Activated CD4-positive, alpha-beta memory T cell treated with anti-CD3 and anti-CD28 coated beads for 36 hours (primary cell): ENCODE measurements at regions of chr14 and their contacts with region 1.

Region 1: DNA sequence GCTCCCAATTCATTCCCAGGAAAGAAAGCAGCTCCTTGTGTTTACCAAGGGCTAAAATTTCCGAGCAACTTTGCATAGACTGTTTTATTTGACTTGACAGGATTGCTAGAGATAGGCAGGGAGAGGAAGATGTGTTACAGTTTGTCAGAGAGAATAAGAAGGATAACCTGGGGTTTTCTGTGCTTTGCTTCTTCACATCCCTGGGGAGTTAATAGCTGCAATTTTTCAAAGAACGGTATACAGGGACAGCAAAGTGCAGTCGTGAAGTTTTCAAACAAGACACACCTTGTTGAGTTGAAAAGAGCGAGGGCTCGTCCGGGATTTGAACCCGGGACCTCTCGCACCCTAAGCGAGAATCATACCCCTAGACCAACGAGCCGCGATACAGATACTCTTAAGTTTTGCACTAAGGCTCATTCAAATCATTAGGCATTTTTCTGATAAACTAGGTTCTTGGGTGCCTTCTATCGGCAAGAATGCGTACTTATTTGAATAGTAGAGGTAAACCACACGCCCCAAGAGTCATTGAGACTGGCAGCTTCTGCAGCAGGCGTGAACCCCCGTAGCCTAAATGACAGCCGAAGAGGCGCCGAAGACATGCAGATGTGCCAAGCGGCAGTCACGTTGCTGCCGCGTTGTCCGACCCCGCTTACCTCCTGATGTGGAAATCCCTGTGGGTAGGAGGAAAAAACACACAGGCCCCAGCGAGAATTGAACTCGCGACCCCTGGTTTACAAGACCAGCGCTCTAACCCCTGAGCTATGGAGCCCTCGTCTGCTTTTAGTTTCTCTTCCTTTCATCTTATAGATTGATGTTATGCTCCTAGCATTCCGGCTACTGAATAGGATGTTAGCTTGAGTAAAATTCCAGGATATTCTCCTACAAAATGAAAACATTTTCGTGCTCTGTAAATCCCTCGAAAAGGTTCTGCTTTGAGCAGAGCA is 22.2 kb upstream of the RNASE12 start:
- DNase-seq: peak; percentile 90
- H3K4me3 Mint-ChIP-seq: no peak overlapping the region
- H3K27ac Mint-ChIP-seq: no peak overlapping the region
- H3K4me1 Mint-ChIP-seq: peaks cover 11% of the 10 kb centered on the region
- H3K27me3 Mint-ChIP-seq: no peaks in the 10 kb centered on the region

Region 2: GRCh38 chr14:20305265-20306078 is 307.9 kb before region 1 on chr14 and contains the start of gene TTC5:
- CTCF ChIA-PET with region 1: interaction called, 3 read pairs
- POLR2A ChIA-PET with region 1: no interaction called
- intact Hi-C with region 1: loop called (anchors 2 kb)
- DNase-seq: peak; percentile 93
- H3K4me3 Mint-ChIP-seq: peak within 1 kb of the TSS; percentile 89
- H3K27ac Mint-ChIP-seq: peak within 1 kb of the TSS; percentile 80
- H3K4me1 Mint-ChIP-seq: peaks cover 24% of the 10 kb centered on the region
- H3K27me3 Mint-ChIP-seq: no peaks in the 10 kb centered on the region
- total RNA-seq, gene TTC5: 19.0 to 22.7 TPM

Region 3: GRCh38 chr14:20343092-20343861 is 270.1 kb before region 1 on chr14 and contains the start of gene PARP2:
- CTCF ChIA-PET with region 1: interaction called, 7 read pairs
- POLR2A ChIA-PET with region 1: interaction called, 13 read pairs
- intact Hi-C with region 1: loop called (anchors 1 kb)
- DNase-seq: peak; percentile 97
- H3K4me3 Mint-ChIP-seq: peak within 1 kb of the TSS; percentile 93
- H3K27ac Mint-ChIP-seq: peak within 1 kb of the TSS; percentile 94
- H3K4me1 Mint-ChIP-seq: peaks cover 19% of the 10 kb centered on the region
- H3K27me3 Mint-ChIP-seq: peaks cover 3% of the 10 kb centered on the region
- total RNA-seq, gene PARP2: 46.3 to 47.3 TPM

Region 4: GRCh38 chr14:20454516-20455354 is 158.6 kb before region 1 on chr14 and contains the starts of genes APEX1 and OSGEP:
- CTCF ChIA-PET with region 1: no interaction called
- POLR2A ChIA-PET with region 1: interaction called, 3 read pairs
- intact Hi-C with region 1: loop called (anchors 1 kb)
- DNase-seq: peak; percentile 99
- H3K4me3 Mint-ChIP-seq: peak within 1 kb of the TSS; percentile 13
- H3K27ac Mint-ChIP-seq: no peak within 1 kb of the TSS
- H3K4me1 Mint-ChIP-seq: peaks cover 22% of the 10 kb centered on the region
- H3K27me3 Mint-ChIP-seq: no peaks in the 10 kb centered on the region
- total RNA-seq, gene APEX1: 186 to 193 TPM
- total RNA-seq, gene OSGEP: 39.2 to 41.0 TPM

Region 5: DNA sequence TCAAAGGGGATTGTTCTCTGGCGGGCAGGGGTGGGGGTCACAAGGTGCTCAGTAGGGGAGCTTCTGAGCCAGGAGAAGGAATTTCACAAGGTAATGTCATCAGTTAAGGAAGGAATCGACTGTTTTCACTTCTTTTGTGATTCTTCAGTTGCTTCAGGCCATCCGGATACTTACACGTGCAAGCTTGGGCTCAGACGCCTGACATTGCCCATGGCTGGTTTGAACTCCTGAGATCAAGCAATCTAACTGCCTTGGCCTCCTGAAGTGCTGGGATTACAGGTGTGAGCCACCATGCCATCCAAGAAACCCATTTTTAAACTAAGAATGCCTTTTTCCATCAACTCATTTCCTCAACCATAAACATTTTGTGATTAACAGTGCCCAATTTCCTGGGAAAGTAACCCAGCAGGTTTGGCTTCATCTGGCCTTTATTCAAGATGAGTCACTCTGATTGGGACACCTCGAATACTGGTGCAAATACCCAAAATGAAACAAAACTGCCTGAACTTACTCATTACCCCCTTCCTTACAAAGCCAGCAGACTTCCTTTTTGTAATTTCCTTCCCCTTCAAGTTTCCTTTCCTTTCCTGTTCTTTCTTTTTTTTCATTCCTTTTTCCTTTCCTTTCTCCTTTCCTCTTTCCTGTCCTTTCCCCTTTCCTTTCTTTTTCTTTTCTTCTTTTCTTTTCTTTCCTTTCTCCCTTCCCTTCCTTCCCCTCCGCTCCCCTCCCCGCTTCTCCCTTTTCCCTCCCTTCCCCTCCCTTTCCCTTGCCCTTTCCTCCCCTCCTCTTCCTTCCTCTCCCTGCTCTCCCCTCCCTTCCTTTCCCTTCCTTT is 118.2 kb before region 1 on chr14:
- CTCF ChIA-PET with region 1: no interaction called
- POLR2A ChIA-PET with region 1: no interaction called
- intact Hi-C with region 1: loop called (anchors 5 kb)
- DNase-seq: no peak
- H3K4me3 Mint-ChIP-seq: no peak overlapping the region
- H3K27ac Mint-ChIP-seq: peak overlapping the region; percentile 35
- H3K4me1 Mint-ChIP-seq: peaks cover 45% of the 10 kb centered on the region
- H3K27me3 Mint-ChIP-seq: no peaks in the 10 kb centered on the region

Region 6: DNA sequence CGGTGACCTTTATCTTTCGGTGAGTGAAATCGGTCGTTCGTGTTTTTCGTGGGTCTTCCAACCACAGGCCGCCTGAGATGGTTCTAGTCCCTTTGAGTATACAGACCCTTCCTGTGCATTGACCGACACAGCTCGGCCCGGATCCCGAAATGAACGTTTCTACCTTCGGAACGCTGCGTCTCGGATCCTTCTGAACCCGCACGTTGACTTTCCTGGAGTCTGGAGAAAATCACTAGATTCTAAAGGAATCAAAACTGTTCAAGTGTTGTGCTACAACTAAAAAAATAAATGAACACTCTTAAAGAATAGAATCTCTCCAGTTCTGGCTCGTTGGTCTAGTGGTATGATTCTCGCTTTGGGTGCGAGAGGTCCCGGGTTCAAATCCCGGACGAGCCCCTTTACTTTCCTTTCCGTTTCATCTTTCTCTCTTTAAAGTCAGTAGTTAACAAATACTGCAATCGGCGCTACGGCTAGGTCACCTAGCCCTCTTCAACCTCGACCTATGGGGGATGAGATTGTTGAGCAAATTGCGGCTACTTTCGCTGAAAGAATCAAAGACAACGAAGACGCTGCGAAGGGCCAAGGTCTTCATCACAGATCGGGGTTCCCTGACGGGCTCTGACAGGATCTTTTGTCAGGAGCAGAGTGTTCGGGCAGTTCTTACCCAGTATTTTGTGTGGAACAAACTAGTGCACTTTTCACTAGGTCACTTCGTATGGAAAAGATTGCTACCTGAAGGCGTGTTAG is 19.5 kb after region 1 on chr14:
- CTCF ChIA-PET with region 1: interaction called, 28 read pairs
- POLR2A ChIA-PET with region 1: interaction called, 16 read pairs
- intact Hi-C with region 1: loop called (anchors 1 kb)
- DNase-seq: peak; percentile 81
- H3K4me3 Mint-ChIP-seq: peak overlapping the region; percentile 76
- H3K27ac Mint-ChIP-seq: peak overlapping the region; percentile 87
- H3K4me1 Mint-ChIP-seq: peaks cover 42% of the 10 kb centered on the region
- H3K27me3 Mint-ChIP-seq: peaks cover 38% of the 10 kb centered on the region

Region 7: DNA sequence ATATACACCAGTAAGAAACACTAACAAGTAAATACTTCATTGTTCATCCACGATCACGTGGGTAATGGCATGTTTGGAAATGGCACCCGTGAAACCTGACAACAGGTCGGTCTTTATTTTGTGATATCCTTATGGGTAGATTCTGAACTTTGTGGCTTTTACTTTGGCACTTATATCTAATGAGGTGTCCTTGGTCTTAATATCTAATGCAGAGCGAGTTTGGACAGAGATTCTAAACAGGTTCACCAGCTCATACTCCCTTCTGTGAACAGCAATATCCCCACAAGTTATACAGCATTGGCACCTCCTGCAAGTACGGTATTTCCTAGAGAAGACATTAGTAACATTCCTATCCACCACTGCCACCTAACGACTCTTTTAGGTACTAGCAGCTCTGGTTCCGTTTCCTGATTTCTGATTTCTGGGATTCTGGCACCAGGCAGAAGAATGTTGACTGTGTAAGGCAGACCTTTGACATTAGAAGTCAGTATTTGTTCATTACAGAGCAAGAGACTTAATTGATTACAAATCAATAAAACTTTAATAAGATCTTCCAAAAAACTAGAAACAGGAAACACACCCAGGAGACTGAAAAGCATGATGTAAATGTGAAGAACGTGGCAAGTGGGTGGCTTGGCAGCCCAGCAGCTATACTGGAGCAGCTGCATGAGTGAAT is 77.6 kb after region 1 on chr14:
- CTCF ChIA-PET with region 1: interaction called, 29 read pairs
- POLR2A ChIA-PET with region 1: no interaction called
- intact Hi-C with region 1: loop called (anchors 1 kb)
- DNase-seq: peak; percentile 36
- H3K4me3 Mint-ChIP-seq: no peak overlapping the region
- H3K27ac Mint-ChIP-seq: no peak overlapping the region
- H3K4me1 Mint-ChIP-seq: peaks cover 13% of the 10 kb centered on the region
- H3K27me3 Mint-ChIP-seq: no peaks in the 10 kb centered on the region